ENCODE measurements at regions of chr16 and their contacts with region 1.

Region 1: GRCh38 chr16:70380861-70381603 is 34.3 kb downstream of the DDX19A start:
- DNase-seq: peak; percentile 98
- H3K4me3 Mint-ChIP-seq: peak overlapping the region; percentile 98
- H3K27ac Mint-ChIP-seq: peak overlapping the region; percentile 94
- H3K4me1 Mint-ChIP-seq: peaks cover 15% of the 10 kb centered on the region
- H3K27me3 Mint-ChIP-seq: no peaks in the 10 kb centered on the region

Region 2: GRCh38 chr16:70289229-70290098 is 91.6 kb before region 1 on chr16 and contains the start of gene AARS1:
- CTCF ChIA-PET with region 1: no interaction called
- intact Hi-C with region 1: loop called (anchors 1 kb)
- DNase-seq: peak; percentile 98
- H3K4me3 Mint-ChIP-seq: peak within 1 kb of the TSS; percentile 99
- H3K27ac Mint-ChIP-seq: peak within 1 kb of the TSS; percentile 99
- H3K4me1 Mint-ChIP-seq: peaks cover 34% of the 10 kb centered on the region
- H3K27me3 Mint-ChIP-seq: no peaks in the 10 kb centered on the region
- total RNA-seq, gene AARS1: 237 to 238 TPM

Region 3: DNA sequence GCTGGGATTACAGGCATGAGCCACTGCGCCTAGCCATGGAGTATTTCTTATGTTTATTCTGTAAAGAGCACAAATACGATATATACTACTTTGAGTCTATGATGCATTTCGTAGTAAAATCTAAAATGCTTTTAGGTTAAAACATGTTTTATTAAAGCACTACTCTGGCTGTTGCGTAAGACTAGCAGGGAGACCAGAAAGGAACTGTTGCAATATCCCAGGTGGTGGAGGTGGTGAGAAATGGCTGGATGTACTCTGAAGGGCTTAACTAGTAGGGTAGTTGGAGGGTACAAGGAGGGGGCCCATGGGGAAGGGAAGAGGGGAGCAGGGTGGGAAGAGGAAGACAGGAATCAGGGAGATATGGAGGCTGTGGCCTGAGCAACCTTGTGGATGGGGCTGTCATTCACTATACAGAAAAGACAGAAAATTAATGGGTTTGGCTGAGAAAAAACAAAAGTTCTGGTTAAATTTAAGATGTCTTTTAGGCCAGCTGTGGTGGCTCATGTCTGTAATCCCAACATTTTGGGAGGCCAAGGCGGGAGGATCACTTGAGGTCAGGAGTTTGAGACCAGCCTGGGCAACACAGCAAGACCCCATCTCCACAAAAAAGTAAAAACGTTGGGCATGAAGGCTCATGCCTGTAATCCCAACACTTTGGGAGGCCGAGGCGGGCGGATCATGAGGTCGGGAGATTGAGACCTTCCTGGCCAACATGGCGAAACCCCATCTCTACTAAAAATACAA is 22.1 kb after region 1 on chr16:
- CTCF ChIA-PET with region 1: no interaction called
- intact Hi-C with region 1: loop called (anchors 1 kb)
- DNase-seq: no peak
- H3K4me3 Mint-ChIP-seq: no peak overlapping the region
- H3K27ac Mint-ChIP-seq: peak overlapping the region; percentile 25
- H3K4me1 Mint-ChIP-seq: peaks cover 46% of the 10 kb centered on the region
- H3K27me3 Mint-ChIP-seq: no peaks in the 10 kb centered on the region

Region 4: DNA sequence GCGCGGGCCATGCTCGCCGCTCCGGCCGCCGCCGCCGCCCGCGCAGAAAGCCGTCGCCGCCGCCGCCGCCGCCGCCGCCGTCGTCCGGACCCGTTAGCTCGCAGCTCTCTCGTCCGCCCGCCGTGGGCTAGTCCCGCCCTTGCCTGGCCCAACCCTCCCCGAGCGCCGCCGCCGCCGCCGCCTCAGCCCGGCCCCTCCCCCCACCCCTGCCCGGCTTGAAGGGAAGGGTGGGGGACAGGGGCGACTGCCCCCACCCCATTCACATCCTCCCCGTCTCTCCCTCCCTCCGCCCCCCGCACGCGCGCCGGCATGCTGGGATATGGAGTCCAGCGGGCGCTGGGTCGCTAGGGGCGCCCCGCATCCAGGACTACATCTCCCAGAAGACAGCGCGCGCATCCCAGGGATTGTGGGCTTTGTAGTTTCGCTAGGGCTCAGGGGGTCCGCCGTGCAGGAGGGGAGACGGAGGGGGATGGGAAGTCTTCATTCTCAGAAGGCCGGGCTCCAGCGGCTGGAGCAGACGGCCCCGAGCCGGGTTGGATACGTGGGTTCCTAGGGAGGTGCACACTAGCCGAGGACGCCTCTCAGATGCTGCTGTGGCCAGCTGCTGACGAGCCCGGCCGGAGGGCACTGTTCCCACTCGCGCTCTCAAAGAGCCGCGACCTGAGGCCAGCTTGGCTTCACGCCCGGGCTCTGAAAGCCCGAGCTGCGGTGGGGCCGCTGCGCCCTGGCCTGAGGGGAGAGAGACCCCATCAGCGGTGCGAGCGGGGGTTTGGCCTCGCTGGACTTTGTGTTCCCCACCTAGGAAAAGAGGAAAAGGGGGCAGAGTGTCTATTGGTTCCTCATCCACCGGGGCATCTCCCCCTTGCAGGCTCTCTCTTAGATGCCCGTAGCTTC is 58.2 kb after region 1 on chr16 and contains the start of gene ST3GAL2:
- CTCF ChIA-PET with region 1: no interaction called
- intact Hi-C with region 1: loop called (anchors 1 kb)
- DNase-seq: peak; percentile 96
- H3K4me3 Mint-ChIP-seq: peak within 1 kb of the TSS; percentile 91
- H3K27ac Mint-ChIP-seq: peak within 1 kb of the TSS; percentile 61
- H3K4me1 Mint-ChIP-seq: peaks cover 27% of the 10 kb centered on the region
- H3K27me3 Mint-ChIP-seq: no peaks in the 10 kb centered on the region
- total RNA-seq, gene ST3GAL2: 9.3 to 9.9 TPM

Region 5: GRCh38 chr16:70470927-70471341 is 89.9 kb after region 1 on chr16:
- CTCF ChIA-PET with region 1: no interaction called
- intact Hi-C with region 1: loop called (anchors 1 kb)
- DNase-seq: no peak
- H3K4me3 Mint-ChIP-seq: no peak overlapping the region
- H3K27ac Mint-ChIP-seq: no peak overlapping the region
- H3K4me1 Mint-ChIP-seq: no peaks in the 10 kb centered on the region
- H3K27me3 Mint-ChIP-seq: no peaks in the 10 kb centered on the region

Region 6: DNA sequence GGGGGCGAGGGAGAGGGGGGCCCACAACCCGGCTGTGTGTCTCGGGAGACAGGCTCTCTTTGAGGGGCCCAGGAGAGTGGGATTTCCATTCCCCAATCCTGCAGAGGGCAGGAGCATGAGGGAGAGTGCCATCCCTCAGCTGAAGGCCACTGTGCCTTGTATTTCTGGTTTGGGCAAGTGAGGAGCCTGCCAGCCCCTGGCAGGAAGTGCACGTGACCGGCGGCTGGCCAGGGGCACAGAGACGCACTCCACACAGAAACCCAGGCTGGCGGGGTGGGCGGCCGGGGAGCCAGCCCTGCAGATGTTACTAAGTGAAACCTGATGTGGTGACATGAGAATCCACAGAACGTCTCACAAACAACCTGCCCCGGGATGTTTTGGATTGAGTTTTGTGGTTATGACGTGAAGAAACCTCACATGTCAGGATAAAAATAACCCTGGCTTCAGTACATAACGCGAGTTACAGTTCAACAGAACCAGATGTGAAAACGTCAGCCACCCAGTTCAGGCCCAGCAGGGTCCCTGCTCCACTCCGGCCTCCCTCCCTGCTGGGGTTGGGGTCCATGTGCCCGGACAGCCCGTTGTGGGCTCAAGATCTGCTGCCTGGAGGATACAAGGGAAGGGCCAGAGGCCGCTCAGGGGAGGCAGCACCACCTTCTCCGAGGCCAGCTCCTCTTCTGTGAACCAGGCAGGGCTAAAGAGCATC is 356.5 kb after region 1 on chr16:
- CTCF ChIA-PET with region 1: no interaction called
- intact Hi-C with region 1: loop called (anchors 5 kb)
- DNase-seq: peak; percentile 87
- H3K4me3 Mint-ChIP-seq: peak overlapping the region; percentile 55
- H3K27ac Mint-ChIP-seq: peak overlapping the region; percentile 93
- H3K4me1 Mint-ChIP-seq: peaks cover 66% of the 10 kb centered on the region
- H3K27me3 Mint-ChIP-seq: no peaks in the 10 kb centered on the region